Psoas muscle (tissue), 8 donors: ENCODE measurements at regions of chr15 and their contacts with region 1.

Region 1: DNA sequence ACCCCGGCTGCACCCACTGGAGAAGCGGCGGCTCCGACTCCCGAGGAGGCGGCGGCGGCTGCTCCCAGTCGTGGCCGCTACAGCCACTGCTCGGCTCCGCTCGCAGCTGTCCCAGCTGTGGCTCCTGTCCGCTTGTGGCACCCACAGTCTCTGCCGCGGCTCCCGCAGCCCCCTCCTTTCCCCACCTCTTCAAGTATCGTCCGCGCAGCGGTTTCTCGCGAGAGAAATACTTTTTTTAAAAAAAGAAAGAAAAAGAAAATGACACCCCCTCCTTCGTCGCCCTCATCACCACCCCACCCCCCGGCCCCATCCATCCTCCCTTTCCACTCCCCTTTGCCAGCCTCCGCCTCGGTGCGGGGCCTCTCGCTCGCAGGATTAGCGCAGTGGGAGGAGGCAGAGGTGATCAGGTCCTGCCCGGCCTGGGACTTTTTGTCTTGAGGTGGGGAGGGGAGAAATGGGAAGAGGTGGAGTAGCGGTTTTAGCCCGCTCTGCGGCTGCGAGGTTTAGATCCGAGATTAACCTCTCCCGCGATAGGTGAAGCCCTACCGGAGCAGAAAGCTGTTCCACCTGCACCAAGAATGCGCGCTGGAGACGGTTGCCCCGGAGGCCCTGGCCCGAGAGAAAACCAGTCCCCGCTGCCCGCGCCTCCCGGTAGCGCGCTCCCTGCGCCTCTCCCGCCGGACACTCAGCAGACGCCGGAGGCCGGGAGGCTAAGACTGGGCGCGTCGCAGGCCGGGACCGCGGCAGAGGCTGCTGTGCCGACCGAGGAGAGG is at the start of gene FBN1:
- DNase-seq: peak; percentile 75 to 84
- ATAC-seq: peak; percentile 66 to 81 (median 73)
- H3K4me3 ChIP-seq: peak within 1 kb of the TSS; percentile 67
- H3K27ac ChIP-seq: peak within 1 kb of the TSS; percentile 65
- H3K4me1 ChIP-seq: peaks cover 3% of the 10 kb centered on the region
- H3K27me3 ChIP-seq: peaks cover 0 to 43% (median 10%) of the 10 kb centered on the region in 3 donors
- CTCF ChIP-seq: no peak
- total RNA-seq, gene FBN1: 16.4 to 40.6 (median 20.1) TPM

Region 2: GRCh38 chr15:48352474-48353072 is 293.2 kb before region 1 on chr15:
- intact Hi-C with region 1: loop called in 1 of 2 experiments (anchors 10 kb)
- DNase-seq: peak in 1 of 2 donors; percentile 27
- ATAC-seq: peak in 2 of 4 donors; percentile 75 to 79
- H3K4me3 ChIP-seq: no peak overlapping the region
- H3K27ac ChIP-seq: no peak overlapping the region
- H3K4me1 ChIP-seq: no peaks in the 10 kb centered on the region
- H3K27me3 ChIP-seq: peaks cover 0 to 3% (median 0%) of the 10 kb centered on the region in 3 donors
- CTCF ChIP-seq: peak; percentile 75

Region 3: DNA sequence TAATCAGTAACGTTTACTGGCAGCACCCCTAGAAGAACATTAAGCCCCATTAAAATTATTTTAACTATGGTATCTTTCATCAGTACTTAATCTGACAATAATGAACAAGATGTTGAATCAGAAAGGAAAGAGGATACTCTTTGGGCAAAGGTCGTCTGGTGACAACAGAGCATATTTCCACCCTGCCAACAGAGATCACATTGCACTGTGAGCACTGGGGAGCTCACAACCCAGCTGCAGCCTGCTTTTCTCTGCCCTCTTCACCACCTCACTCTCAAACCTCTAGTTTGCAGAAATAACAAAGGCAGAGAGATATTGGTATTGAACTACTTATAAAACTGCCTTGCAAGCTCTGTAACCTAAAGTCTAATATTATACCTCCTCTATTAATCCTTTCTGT is 130.2 kb before region 1 on chr15:
- intact Hi-C with region 1: loop called in 1 of 2 experiments (anchors 5 kb)
- DNase-seq: no peak
- ATAC-seq: peak in 3 of 4 donors; percentile 53 to 64 (median 64)
- H3K4me3 ChIP-seq: no peak overlapping the region
- H3K27ac ChIP-seq: no peak overlapping the region
- H3K4me1 ChIP-seq: no peaks in the 10 kb centered on the region
- H3K27me3 ChIP-seq: no peaks in the 10 kb centered on the region
- CTCF ChIP-seq: no peak